Activated CD8-positive, alpha-beta memory T cell treated with anti-CD3 and anti-CD28 coated beads, Interleukin-2, amount 10 ng/mL, durations not matched to agents 7 days and 5 days (primary cell): ENCODE measurements at regions of chr21 and their contacts with region 1.

Region 1: DNA sequence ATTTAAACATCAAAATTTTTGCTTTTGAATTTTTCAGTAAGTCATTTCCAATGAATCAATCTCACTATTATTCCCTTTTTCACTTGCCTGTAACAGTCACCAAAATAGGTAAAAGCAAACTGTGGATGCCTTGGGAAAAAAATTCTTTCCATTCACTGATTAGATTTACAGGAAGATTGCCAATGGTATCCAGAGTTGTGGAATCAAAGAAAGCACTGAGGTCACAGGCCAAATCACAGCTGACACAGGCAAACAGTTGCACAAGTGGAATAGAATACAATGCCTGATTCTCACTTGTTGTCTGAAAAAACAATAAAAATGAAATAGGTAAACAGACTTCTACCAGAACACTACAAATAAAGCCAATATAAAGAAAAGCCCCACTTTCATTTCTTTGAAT is 48.4 kb downstream of the LTN1 start:
- DNase-seq: no peak
- ATAC-seq: no peak
- H3K4me3 Mint-ChIP-seq: no peak overlapping the region
- H3K27ac Mint-ChIP-seq: no peak overlapping the region
- H3K4me1 Mint-ChIP-seq: peaks cover 21% of the 10 kb centered on the region
- H3K27me3 Mint-ChIP-seq: no peaks in the 10 kb centered on the region

Region 2: DNA sequence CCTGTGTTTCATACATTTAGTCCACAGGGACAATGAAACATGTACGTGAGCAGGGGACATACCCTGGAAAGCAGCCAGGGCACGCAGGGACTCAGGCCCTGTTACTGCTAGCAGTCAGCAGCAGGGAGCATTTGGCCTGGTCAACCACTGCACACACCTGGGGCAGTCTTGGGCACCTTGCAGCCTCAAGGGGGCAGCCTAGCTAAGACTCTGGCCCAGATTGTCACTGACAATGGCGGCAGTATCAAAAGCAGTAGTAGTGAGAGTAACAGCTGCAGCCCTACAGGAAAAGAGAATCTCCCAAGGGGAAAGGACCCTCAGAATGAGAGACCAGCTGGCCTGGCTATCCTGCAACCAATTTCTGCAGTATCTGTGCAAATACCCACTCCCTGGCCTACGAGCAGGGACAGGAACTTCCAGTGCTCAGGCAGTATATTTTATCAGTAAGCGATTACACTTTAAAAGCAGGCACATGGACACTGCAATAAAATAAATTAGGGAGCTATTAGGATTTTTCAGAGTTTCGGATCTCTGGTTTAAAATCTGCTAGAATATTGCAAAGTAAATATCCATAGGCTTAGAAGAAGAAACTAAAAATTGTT is 427.2 kb before region 1 on chr21:
- CTCF ChIA-PET with region 1: interaction called, 10 read pairs
- DNase-seq: peak; percentile 78
- ATAC-seq: peak; percentile 92
- H3K4me3 Mint-ChIP-seq: no peak overlapping the region
- H3K27ac Mint-ChIP-seq: no peak overlapping the region
- H3K4me1 Mint-ChIP-seq: no peaks in the 10 kb centered on the region
- H3K27me3 Mint-ChIP-seq: peaks cover 8% of the 10 kb centered on the region